Activated CD4-positive, alpha-beta memory T cell treated with anti-CD3 and anti-CD28 coated beads, Interleukin-2, amount 10 ng/mL, durations not matched to agents 7 days and 5 days (primary cell): ENCODE measurements at regions of chr22 and their contacts with region 1.

Region 1: DNA sequence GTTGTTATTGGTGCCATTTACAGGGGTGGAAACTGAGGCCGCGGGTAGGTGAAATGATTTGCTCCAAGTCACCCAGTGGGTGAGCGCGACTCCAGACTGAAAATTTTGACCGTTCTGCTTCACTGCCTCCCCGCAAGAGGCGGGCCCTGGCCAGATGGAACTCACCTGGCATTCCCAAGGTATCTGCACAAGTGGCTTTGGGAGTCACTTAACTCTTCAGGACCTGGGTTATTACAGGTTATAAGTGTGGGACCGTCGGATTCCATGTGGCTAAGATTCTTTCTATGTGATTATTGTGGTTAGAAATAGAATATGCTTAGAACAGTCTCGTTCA is 598 bp downstream of the CABIN1 start:
- DNase-seq: no peak
- H3K4me3 Mint-ChIP-seq: peak overlapping the region; percentile 89
- H3K27ac Mint-ChIP-seq: peak overlapping the region; percentile 86
- H3K4me1 Mint-ChIP-seq: peaks cover 31% of the 10 kb centered on the region
- H3K27me3 Mint-ChIP-seq: no peaks in the 10 kb centered on the region

Region 2: DNA sequence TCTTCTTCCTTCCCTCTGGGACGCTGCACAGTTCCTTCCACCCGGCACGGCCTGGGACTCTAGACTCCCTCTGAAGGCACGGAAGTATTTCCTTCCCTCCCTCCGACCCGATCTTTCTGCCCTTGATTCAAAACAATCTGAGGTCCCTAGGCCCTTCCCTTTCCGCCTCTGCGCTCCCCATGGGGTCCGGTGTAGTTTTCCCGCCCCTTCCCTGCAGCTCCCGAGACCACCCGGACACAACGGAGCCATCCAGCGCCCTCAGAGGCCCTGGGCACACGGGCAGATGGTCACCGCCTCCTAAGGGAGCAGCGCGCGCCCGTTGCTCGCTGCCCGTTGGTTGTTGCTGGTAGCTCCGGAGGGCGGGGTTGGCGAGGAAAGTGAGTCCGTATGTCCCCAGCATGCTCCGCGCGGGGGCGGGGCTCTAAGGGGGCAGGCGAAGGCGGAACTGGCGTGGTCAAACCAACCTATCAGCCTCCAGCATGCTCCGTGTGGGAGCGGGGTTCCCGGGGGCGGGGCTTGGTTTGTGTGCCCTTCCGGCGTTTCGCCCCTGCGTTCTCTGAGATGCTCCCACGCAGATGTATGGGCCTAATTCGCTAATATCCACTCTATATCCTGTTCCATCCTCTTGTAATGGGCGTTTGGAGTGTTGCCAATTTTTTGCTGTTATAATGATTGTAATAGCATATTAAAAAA is 97.9 kb before region 1 on chr22:
- CTCF ChIA-PET with region 1: no interaction called
- POLR2A ChIA-PET with region 1: interaction called, 12 read pairs
- DNase-seq: peak; percentile 100
- H3K4me3 Mint-ChIP-seq: peak overlapping the region; percentile 86
- H3K27ac Mint-ChIP-seq: peak overlapping the region; percentile 95
- H3K4me1 Mint-ChIP-seq: peaks cover 27% of the 10 kb centered on the region
- H3K27me3 Mint-ChIP-seq: no peaks in the 10 kb centered on the region

Region 3: DNA sequence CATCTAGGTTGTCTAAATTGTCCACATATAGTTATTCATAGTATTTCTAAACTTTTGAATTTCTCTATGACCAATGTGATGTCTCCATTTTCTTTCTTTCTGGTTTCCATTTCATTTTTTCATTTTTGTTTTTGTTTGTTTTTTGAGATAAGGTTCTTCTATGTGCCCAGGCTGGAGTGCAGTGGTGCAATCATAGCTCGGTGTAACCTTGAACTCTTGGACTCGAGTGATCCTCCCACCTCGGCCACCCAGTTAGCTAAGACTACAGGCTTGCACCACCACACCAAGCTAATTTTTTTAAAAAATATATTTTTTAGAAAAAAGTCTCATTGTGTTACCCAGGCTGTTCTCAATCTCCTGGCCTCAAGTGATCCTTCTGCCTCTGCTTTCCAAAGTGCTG is 14.6 kb before region 1 on chr22:
- CTCF ChIA-PET with region 1: no interaction called
- POLR2A ChIA-PET with region 1: no interaction called
- DNase-seq: no peak
- H3K4me3 Mint-ChIP-seq: no peak overlapping the region
- H3K27ac Mint-ChIP-seq: no peak overlapping the region
- H3K4me1 Mint-ChIP-seq: peaks cover 4% of the 10 kb centered on the region
- H3K27me3 Mint-ChIP-seq: peaks cover 13% of the 10 kb centered on the region

Region 4: DNA sequence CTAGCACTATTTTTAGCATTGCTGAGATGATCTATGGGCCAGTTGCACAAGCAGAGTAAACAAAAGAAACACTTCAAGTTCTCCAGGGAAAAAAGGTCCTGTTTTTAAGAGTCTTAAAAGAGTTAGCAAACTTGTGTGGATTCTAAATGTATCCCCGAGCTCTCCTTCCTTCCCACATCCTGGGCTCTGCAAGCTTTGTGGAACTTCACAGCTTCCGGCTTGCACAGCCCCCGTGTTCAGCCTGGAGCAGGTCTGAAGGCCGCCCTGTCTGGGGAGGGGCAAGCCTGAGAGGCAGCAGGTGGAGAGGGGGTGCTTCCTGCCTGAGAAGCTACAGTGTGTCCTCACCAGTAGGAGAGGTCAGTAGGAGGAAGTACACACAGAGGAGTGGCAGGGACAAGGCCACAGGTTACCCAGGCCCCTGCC is 134.5 kb after region 1 on chr22:
- CTCF ChIA-PET with region 1: no interaction called
- POLR2A ChIA-PET with region 1: no interaction called
- DNase-seq: peak; percentile 28
- H3K4me3 Mint-ChIP-seq: no peak overlapping the region
- H3K27ac Mint-ChIP-seq: peak overlapping the region; percentile 24
- H3K4me1 Mint-ChIP-seq: peaks cover 38% of the 10 kb centered on the region
- H3K27me3 Mint-ChIP-seq: no peaks in the 10 kb centered on the region